OCI-LY7 (cell line): ENCODE measurements at regions of chr4 and their contacts with region 1.

Region 1: DNA sequence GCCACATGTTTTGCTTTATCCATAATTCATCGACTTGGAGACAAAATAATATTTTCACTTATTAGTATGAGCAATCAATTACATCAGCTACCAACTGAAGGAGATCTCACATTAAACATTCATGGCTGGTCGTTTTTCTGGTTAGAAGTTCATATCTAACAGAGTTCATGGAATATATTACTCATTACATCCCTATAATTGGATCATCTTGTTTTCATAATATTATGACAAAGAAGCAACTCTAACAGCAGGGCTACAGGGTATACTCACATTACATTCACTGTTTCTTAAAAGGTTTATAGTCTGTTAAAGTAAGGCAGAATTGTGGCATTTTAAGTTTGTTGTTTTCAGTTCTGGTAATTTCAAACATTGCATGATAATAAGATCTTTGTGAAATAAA is 33.0 kb downstream of the GSTCD start:
- DNase-seq: no peak
- H3K4me3 ChIP-seq: no peak overlapping the region
- H3K27ac ChIP-seq: no peak overlapping the region
- H3K4me1 ChIP-seq: no peaks in the 10 kb centered on the region
- CTCF ChIP-seq: no peak

Region 2: DNA sequence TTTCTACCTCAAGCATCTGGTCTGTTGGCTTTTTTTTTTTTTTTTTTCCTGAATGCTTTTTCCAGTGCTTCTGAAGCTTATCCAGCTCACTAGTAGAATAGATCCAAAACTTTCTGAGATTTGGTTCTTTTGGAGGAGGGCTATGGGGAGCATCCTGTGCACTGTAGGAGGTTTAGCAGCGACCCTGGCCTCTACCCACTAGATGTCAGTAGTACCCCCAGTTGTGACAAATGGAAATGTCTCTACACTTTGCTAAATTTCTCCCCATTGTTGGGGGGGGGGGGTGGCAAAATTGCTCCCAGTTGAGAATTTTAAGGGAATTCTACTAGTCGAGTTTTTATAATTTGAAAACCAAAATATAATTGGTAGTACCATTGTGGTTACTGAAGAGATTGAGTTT is 244.6 kb before region 1 on chr4:
- CTCF ChIA-PET with region 1: no interaction called
- POLR2A ChIA-PET with region 1: interaction called, 11 read pairs
- intact Hi-C with region 1: no loop called
- DNase-seq: no peak
- H3K4me3 ChIP-seq: no peak overlapping the region
- H3K27ac ChIP-seq: no peak overlapping the region
- H3K4me1 ChIP-seq: no peaks in the 10 kb centered on the region
- CTCF ChIP-seq: peak; percentile 64